ENCODE measurements at regions of chr12 and their contacts with region 1.

Region 1: GRCh38 chr12:13079440-13079906 is 24.0 kb downstream of the GSG1 start:
- DNase-seq: peak; percentile 98
- H3K4me3 ChIP-seq: no peak overlapping the region
- H3K27ac ChIP-seq: peak overlapping the region; percentile 69
- H3K4me1 ChIP-seq: peaks cover 12% of the 10 kb centered on the region
- H3K27me3 ChIP-seq: no peaks in the 10 kb centered on the region
- CTCF ChIP-seq: peak; percentile 64 to 76
- POLR2A ChIP-seq: no peak

Region 2: DNA sequence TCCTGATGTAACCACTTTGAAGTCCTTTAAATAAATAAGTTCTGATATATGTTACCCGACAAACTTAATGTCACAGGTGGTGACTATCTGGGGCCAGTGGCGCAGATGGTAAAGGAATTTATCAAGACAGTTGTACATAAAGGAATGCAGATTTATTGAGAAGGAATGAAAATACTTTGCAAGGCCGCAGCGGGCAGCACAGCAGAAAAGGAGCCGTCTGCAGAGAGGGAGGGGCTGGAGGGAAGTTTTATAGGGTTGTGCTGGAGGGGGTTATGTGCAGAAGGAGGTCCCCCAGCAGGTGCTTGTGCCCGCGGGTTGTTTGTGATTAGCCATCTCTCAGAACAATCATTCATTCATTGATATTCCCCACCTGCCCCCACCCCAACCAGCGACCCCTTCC is 144.9 kb before region 1 on chr12:
- CTCF ChIA-PET with region 1: no interaction called
- POLR2A ChIA-PET with region 1: no interaction called
- dilution Hi-C with region 1: no loop called
- intact Hi-C with region 1: no loop called
- DNase-seq: no peak
- H3K4me3 ChIP-seq: no peak overlapping the region
- H3K27ac ChIP-seq: no peak overlapping the region
- H3K4me1 ChIP-seq: no peaks in the 10 kb centered on the region
- H3K27me3 ChIP-seq: no peaks in the 10 kb centered on the region
- CTCF ChIP-seq: no peak
- POLR2A ChIP-seq: no peak

Region 3: DNA sequence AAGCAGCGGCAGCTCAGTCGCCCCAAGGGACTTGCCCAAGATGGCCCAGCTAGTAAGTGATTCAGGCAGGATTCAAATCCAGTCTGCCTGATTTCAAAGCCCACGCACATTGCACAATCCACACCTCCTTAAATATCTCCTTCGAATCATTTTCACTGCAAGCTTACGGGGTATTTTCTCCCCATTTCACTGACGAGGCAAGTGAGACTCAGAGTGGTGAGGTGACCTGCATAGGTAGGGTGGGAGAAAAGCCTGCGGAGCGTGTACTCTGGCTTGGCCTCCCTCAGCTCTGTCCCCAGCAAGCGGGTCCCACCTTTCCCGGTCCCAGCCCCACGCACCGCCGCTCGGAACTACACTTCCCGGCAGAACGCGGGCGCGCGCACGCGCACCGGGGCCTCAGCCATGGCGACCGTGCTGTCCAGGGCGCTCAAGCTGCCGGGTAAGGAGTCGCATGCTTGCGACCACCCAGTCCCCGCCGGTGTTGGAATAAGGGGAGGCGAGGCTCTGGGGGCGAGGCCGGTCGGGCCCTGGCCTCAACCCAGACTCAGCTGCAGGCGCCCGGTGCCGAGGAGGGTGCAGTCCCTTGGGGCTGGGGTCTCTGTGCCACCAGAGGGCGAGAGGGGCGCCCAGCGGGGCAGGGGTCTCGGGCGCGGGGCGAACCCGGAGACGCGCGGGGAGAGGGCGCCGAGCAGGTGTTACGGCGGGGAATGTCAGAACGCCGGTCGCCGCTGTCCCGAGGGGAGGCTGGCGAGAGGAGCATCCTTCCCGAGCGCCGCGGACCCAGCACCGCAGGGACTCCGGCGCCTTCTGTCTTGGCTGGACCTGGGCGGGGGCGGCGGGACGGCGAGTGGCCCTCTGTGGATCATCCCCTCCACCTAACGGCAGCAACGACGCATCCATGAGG is 35.2 kb before region 1 on chr12 and contains the start of gene FAM234B:
- CTCF ChIA-PET with region 1: interaction called, 20 read pairs
- POLR2A ChIA-PET with region 1: no interaction called
- dilution Hi-C with region 1: no loop called
- intact Hi-C with region 1: no loop called
- DNase-seq: peak; percentile 70
- H3K4me3 ChIP-seq: peak within 1 kb of the TSS; percentile 66 to 85 (median 79)
- H3K27ac ChIP-seq: no peak within 1 kb of the TSS
- H3K4me1 ChIP-seq: peaks cover 10% of the 10 kb centered on the region
- H3K27me3 ChIP-seq: peaks cover 2% of the 10 kb centered on the region in 2 experiments
- CTCF ChIP-seq: peak; percentile 9 to 21
- POLR2A ChIP-seq: no peak
- total RNA-seq, gene FAM234B: 9.4 and 13.2 TPM in 2 replicates

Region 4: GRCh38 chr12:13094347-13094746 is 14.9 kb after region 1 on chr12:
- CTCF ChIA-PET with region 1: interaction called, 23 read pairs
- POLR2A ChIA-PET with region 1: interaction called, 3 read pairs
- dilution Hi-C with region 1: no loop called
- intact Hi-C with region 1: loop called (anchors 1 kb)
- DNase-seq: peak; percentile 30
- H3K4me3 ChIP-seq: no peak overlapping the region
- H3K27ac ChIP-seq: peak overlapping the region; percentile 59
- H3K4me1 ChIP-seq: peaks cover 42% of the 10 kb centered on the region
- H3K27me3 ChIP-seq: no peaks in the 10 kb centered on the region
- CTCF ChIP-seq: no peak
- POLR2A ChIP-seq: no peak

Region 5: GRCh38 chr12:13196130-13196921 is 116.9 kb after region 1 on chr12 and contains the start of gene EMP1:
- CTCF ChIA-PET with region 1: interaction called, 8 read pairs
- POLR2A ChIA-PET with region 1: no interaction called
- dilution Hi-C with region 1: no loop called
- intact Hi-C with region 1: loop called (anchors 1 kb)
- DNase-seq: peak; percentile 99
- H3K4me3 ChIP-seq: peak within 1 kb of the TSS; percentile 85 to 99 (median 95)
- H3K27ac ChIP-seq: peak within 1 kb of the TSS; percentile 96
- H3K4me1 ChIP-seq: peaks cover 35% of the 10 kb centered on the region
- H3K27me3 ChIP-seq: no peaks in the 10 kb centered on the region
- CTCF ChIP-seq: no peak
- POLR2A ChIP-seq: peak; percentile 99
- total RNA-seq, gene EMP1: 528 and 577 TPM in 2 replicates

Region 6: GRCh38 chr12:13534645-13535398 is 455.3 kb after region 1 on chr12:
- CTCF ChIA-PET with region 1: no interaction called
- POLR2A ChIA-PET with region 1: no interaction called
- dilution Hi-C with region 1: no loop called
- intact Hi-C with region 1: no loop called
- DNase-seq: peak; percentile 68
- H3K4me3 ChIP-seq: no peak overlapping the region
- H3K27ac ChIP-seq: no peak overlapping the region
- H3K4me1 ChIP-seq: no peaks in the 10 kb centered on the region
- H3K27me3 ChIP-seq: peaks cover 0 to 3% of the 10 kb centered on the region in 2 experiments
- CTCF ChIP-seq: peak; percentile 89 to 98
- POLR2A ChIP-seq: no peak

Measured in endothelial cell of umbilical vein (primary cell).